HCT116 (cell line): ENCODE measurements at regions of chr4 and their contacts with region 1.

Region 1: GRCh38 chr4:182925298-182925738 is 8.1 kb upstream of the DCTD start:
- DNase-seq: peak; percentile 91
- ATAC-seq: peak; percentile 99
- H3K4me3 ChIP-seq: no peak overlapping the region
- H3K27ac ChIP-seq: no peak overlapping the region
- H3K4me1 ChIP-seq: peaks cover 0 to 5% of the 10 kb centered on the region in 2 experiments; a peak in 1 of 4 replicates
- H3K27me3 ChIP-seq: no peaks in the 10 kb centered on the region
- CTCF ChIP-seq: peak; percentile 85 to 99 (median 89)
- POLR2A ChIP-seq: no peak
- RAD21 ChIP-seq: peak; percentile 96

Region 2: DNA sequence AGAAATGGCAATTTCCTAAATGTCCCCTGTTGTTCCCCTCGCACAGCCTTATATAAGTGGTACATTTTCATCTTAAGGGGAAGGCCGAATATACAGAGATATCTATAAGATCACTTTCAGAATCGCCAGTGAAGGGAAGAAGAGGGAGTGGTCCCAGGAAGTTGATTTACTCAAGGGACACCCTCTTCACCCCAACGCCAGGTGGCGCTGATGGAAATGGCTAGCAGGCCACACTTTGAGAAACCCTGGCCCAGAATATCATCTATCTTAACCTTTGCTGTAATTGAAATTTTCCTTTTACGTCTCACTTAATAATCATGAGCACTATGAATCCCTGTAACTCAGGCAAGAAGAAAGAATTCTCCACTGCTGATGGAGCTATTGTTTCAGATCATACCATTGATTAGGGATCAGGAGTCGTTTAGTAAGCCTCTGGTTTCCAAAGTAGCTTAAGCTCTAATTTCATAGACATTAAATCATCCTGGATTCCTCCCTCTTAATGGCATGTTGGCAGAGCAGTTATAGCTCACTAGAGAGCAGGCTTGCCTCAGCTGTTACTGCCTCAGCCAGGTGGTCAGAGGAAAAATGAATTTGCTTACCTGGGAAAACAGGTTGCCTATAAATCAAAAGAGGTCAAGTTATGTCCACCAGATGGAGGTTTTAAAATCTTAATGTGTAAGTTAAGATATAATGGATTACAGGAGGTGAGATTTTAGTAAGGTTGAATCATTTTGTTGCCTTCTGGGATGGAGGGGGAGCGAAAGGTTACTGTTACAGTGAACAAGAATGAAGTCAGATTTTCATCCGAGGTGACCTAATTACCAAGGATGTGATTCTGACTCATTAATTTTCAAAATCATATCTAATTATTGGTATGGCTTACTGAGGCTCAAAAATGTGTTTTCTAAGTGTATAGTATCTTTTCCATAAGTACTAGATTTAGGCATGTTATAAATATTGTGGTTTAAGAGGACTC is 1623.3 kb before region 1 on chr4:
- CTCF ChIA-PET with region 1: interaction called, 5 read pairs
- POLR2A ChIA-PET with region 1: no interaction called
- RAD21 ChIA-PET with region 1: no interaction called
- intact Hi-C with region 1: loop called (anchors 5 kb)
- DNase-seq: peak; percentile 41
- ATAC-seq: peak; percentile 92
- H3K4me3 ChIP-seq: no peak overlapping the region
- H3K27ac ChIP-seq: no peak overlapping the region
- H3K4me1 ChIP-seq: no peaks in the 10 kb centered on the region
- H3K27me3 ChIP-seq: no peaks in the 10 kb centered on the region
- CTCF ChIP-seq: peak; percentile 40 to 85 (median 75); a peak in 5 of 6 replicates
- POLR2A ChIP-seq: no peak
- RAD21 ChIP-seq: peak; percentile 58

Region 3: GRCh38 chr4:182478475-182478874 is 446.8 kb before region 1 on chr4:
- CTCF ChIA-PET with region 1: no interaction called
- POLR2A ChIA-PET with region 1: no interaction called
- RAD21 ChIA-PET with region 1: no interaction called
- intact Hi-C with region 1: loop called (anchors 1 kb)
- DNase-seq: peak; percentile 16
- ATAC-seq: peak; percentile 74
- H3K4me3 ChIP-seq: no peak overlapping the region
- H3K27ac ChIP-seq: no peak overlapping the region
- H3K4me1 ChIP-seq: no peaks in the 10 kb centered on the region
- H3K27me3 ChIP-seq: peaks cover 9% of the 10 kb centered on the region; the same call in 1 of the 2 replicates
- CTCF ChIP-seq: peak; percentile 47 to 54 (median 53); a peak in 5 of 6 replicates
- POLR2A ChIP-seq: no peak
- RAD21 ChIP-seq: peak; percentile 42

Region 4: GRCh38 chr4:182642831-182643230 is 282.5 kb before region 1 on chr4:
- CTCF ChIA-PET with region 1: no interaction called
- POLR2A ChIA-PET with region 1: no interaction called
- RAD21 ChIA-PET with region 1: no interaction called
- intact Hi-C with region 1: loop called (anchors 10 kb)
- DNase-seq: no peak
- ATAC-seq: peak; percentile 46; the same call in 1 of the 2 replicates
- H3K4me3 ChIP-seq: no peak overlapping the region
- H3K27ac ChIP-seq: no peak overlapping the region
- H3K4me1 ChIP-seq: no peaks in the 10 kb centered on the region
- H3K27me3 ChIP-seq: peaks cover 16% of the 10 kb centered on the region; the same call in 1 of the 2 replicates
- CTCF ChIP-seq: no peak; a peak in 1 of 6 replicates
- POLR2A ChIP-seq: no peak
- RAD21 ChIP-seq: no peak

Region 5: GRCh38 chr4:183011213-183011907 is 86.0 kb after region 1 on chr4:
- CTCF ChIA-PET with region 1: no interaction called
- POLR2A ChIA-PET with region 1: no interaction called
- RAD21 ChIA-PET with region 1: no interaction called
- intact Hi-C with region 1: no loop called
- DNase-seq: no peak
- ATAC-seq: no peak
- H3K4me3 ChIP-seq: no peak overlapping the region
- H3K27ac ChIP-seq: no peak overlapping the region
- H3K4me1 ChIP-seq: no peaks in the 10 kb centered on the region
- H3K27me3 ChIP-seq: peaks cover 16% of the 10 kb centered on the region; the same call in 1 of the 2 replicates
- CTCF ChIP-seq: no peak
- POLR2A ChIP-seq: no peak
- RAD21 ChIP-seq: no peak

Region 6: DNA sequence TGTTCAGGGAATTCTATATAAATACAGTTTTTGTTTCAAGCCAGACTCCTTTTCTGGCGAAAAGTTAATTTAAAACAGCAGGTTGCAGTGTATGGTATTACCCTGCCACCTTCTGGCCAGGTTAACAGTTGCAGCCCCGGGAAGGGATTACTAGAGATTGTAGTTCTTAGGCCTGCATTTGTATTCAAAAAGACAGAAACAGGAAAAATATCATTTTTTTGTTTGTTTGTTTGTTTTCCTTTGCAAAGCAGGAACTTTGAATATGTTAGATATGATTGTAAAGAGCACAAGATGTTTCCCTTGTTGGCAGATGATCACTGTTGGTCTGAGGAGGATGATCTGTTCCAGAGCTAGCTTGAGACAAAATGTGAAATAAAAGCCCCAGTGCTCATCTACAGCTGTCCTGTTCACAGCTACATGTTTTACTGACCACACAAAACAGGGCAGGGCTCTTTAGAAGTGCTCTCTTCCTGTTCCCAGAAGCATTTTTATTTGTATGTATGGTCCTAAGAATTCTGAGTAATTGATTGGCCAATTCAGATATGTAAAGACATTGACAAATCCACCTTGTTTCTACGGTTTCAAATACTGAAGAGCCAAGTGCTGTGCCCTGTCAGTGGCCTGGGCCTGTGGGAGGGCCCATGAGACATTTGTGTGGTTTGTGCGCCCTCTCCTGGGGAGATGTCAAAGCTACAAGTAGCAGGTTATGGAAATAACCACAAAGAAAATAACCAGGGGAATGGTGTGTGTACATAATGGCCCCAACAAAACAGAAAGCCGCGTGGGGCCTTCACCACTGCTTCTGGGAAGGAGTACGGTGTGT is 336.8 kb after region 1 on chr4:
- CTCF ChIA-PET with region 1: interaction called, 18 read pairs
- POLR2A ChIA-PET with region 1: no interaction called
- RAD21 ChIA-PET with region 1: no interaction called
- intact Hi-C with region 1: no loop called
- DNase-seq: peak; percentile 56
- ATAC-seq: peak; percentile 97
- H3K4me3 ChIP-seq: no peak overlapping the region
- H3K27ac ChIP-seq: 0 out of 2 replicates have a peak overlapping the region, but pooled peaks have one; percentile 6
- H3K4me1 ChIP-seq: peaks cover 0 to 4% of the 10 kb centered on the region in 2 experiments; a peak in 2 of 4 replicates
- H3K27me3 ChIP-seq: no peaks in the 10 kb centered on the region
- CTCF ChIP-seq: peak; percentile 84 to 87 (median 86)
- POLR2A ChIP-seq: no peak
- RAD21 ChIP-seq: peak; percentile 82